ENCODE measurements at regions of chr11 and their contacts with region 1.

Region 1: GRCh38 chr11:3797329-3798095 is at the start of gene NUP98:
- DNase-seq: peak; percentile 100
- H3K4me3 ChIP-seq: peak within 1 kb of the TSS; percentile 74 to 98 (median 87)
- H3K27ac ChIP-seq: peak within 1 kb of the TSS; percentile 93 to 98 (median 95)
- H3K4me1 ChIP-seq: peaks cover 0 to 35% (median 34%) of the 10 kb centered on the region in 4 donors
- H3K27me3 ChIP-seq: no peaks in the 10 kb centered on the region
- CTCF ChIP-seq: no peak
- EP300 ChIP-seq: no peak
- POLR2A ChIP-seq: peak; percentile 97
- total RNA-seq, gene NUP98: 83.5 to 158 (median 126) TPM

Region 2: DNA sequence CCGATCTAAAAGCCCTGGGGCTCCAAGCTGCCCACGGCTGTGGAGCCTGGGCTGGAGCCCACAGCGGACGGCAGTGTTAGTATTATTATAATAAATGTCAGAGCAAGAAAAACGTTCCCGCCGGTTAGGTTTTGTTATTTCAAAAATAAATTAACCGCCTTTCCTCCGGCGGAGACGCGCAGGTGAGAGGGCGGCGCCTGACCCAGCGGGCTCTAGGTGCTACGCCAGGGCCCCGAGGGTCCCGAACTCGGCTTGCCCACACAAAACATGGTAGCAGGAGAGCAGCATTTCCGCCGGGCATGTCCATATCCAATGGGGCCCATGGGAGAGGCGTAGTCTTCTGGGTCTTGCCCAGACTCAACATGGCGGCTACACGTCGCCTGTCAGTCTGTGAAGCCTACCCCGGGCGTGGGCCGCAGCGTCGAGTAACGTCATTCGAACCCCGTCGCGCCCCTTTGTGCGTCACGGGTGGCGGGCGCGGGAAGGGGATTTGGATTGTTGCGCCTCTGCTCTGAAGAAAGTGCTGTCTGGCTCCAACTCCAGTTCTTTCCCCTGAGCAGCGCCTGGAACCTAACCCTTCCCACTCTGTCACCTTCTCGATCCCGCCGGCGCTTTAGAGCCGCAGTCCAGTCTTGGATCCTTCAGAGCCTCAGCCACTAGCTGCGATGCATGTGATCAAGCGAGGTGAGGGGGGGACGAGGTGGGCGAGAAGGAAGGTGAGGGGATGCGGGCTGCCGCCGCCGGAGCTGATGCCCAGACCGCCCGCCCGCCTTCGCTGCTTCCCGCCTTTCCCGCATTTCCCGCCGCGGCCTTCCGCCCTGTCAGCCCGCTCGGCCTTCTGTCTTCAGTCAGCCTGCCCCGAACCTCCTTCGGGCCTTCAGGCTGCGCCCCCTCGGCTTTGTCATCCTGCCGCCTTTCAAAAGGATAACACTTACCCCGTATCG is 297.1 kb after region 1 on chr11 and contains the start of gene RRM1:
- intact Hi-C with region 1: loop called (anchors 5 kb)
- DNase-seq: peak; percentile 98
- H3K4me3 ChIP-seq: peak within 1 kb of the TSS; percentile 71 to 82 (median 76)
- H3K27ac ChIP-seq: peak within 1 kb of the TSS; percentile 91 to 95 (median 92)
- H3K4me1 ChIP-seq: peaks cover 0 to 24% (median 17%) of the 10 kb centered on the region in 4 donors
- H3K27me3 ChIP-seq: no peaks in the 10 kb centered on the region
- CTCF ChIP-seq: no peak
- EP300 ChIP-seq: peak in 1 of 4 donors; percentile 46
- POLR2A ChIP-seq: peak in 1 of 2 donors; percentile 40
- total RNA-seq, gene RRM1: 23.7 to 39.6 (median 28.7) TPM

Region 3: DNA sequence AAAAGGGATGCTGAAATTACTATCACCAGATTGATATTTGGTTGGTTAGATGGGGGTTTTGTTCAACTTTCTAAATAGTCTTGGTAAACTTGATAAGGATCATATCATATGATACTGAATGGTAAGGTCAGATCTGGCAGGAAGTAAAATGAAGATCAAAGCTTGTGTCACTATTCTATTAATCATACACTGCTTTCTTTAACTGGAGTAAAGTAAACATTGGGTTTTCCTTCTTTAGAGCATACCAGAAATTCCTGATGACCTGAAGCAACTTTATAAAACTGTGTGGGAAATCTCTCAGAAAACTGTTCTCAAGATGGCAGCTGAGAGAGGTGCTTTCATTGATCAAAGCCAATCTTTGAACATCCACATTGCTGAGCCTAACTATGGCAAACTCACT is 337.3 kb after region 1 on chr11:
- intact Hi-C with region 1: no loop called
- DNase-seq: no peak
- H3K4me3 ChIP-seq: no peak overlapping the region
- H3K27ac ChIP-seq: no peak overlapping the region
- H3K4me1 ChIP-seq: no peaks in the 10 kb centered on the region
- H3K27me3 ChIP-seq: no peaks in the 10 kb centered on the region
- CTCF ChIP-seq: no peak
- EP300 ChIP-seq: no peak
- POLR2A ChIP-seq: no peak